ENCODE measurements at regions of chr6 and their contacts with region 1.

Region 1: DNA sequence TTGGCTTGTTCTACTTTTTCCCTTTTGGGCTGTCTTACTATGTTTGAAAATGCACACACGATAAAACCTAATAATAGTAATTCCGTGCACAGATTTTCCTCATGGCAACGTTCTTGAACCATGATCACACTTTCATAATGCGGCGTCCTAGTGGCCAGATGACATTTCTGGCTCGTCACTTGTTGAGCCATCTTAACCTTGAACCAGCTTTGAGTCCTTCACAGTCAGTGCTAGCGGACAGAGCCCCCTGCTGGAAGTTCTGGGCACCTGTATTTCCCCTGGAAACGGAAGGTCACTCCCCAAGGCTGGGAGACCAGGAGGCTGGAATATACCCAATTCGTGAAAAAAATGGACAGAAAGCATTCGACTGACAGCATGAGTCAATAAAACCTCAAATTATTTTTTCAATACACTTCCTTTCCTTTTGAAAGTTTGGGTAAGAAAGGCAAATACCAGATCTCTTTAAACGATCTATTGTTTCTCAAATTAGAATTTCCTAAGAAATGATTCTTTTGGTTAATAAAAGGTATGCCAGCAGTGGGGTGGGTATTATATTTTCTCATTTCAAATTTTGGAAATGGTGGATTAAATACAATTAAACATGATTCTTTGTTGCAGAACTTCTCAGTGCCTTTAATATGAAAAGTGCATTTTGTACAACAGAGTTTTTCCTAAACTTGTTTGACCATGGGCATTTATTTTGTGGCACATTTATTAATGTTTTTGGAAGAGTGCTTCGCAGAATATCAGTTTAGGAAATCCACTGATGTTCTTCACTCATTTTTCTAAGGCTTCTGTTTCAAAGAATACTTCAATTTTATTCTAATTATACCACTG is 542.3 kb downstream of the QKI start:
- DNase-seq: peak; percentile 81 to 94 (median 90)
- ATAC-seq: peak; percentile 89 to 92
- H3K4me3 ChIP-seq: no peak overlapping the region
- H3K27ac ChIP-seq: no peak overlapping the region
- H3K4me1 ChIP-seq: no peaks in the 10 kb centered on the region
- H3K27me3 ChIP-seq: no peaks in the 10 kb centered on the region

Region 2: DNA sequence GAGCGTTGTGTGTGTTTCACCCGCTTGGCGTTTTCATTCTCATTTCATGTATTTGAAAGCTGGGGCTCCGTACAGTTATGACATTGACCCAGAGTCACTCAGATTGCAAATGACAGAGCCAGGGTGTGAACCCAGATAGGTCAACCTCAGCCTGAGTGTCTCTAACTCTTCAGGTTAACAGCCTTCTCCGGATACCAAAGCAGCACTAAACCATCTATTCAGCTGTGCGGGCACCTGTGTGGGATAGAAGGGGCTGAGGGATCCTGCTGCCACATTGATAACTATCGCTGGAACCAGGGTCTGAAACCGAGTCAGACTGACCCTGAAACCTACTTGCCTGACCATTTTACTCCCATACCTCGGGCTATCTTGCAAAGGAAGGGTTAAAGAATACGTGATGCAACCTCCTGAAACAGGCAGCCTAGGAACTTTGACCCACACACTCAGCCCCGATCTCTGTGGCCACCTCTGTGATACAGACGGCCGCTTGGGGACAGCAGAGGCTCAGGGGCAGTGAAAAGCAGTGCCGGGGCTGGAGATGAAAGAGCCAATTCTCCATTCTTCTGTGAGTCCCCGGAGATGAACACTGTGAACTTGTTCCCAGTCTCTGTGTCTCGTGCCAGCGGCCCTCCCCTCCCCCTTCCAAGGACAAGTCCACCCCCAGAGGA is 775.8 kb before region 1 on chr6:
- intact Hi-C with region 1: loop called in 2 of 4 experiments (anchors 10 kb)
- DNase-seq: peak; percentile 80 to 92 (median 90)
- ATAC-seq: peak; percentile 96
- H3K4me3 ChIP-seq: no peak overlapping the region
- H3K27ac ChIP-seq: no peak overlapping the region
- H3K4me1 ChIP-seq: peaks cover 3% of the 10 kb centered on the region
- H3K27me3 ChIP-seq: no peaks in the 10 kb centered on the region

Region 3: DNA sequence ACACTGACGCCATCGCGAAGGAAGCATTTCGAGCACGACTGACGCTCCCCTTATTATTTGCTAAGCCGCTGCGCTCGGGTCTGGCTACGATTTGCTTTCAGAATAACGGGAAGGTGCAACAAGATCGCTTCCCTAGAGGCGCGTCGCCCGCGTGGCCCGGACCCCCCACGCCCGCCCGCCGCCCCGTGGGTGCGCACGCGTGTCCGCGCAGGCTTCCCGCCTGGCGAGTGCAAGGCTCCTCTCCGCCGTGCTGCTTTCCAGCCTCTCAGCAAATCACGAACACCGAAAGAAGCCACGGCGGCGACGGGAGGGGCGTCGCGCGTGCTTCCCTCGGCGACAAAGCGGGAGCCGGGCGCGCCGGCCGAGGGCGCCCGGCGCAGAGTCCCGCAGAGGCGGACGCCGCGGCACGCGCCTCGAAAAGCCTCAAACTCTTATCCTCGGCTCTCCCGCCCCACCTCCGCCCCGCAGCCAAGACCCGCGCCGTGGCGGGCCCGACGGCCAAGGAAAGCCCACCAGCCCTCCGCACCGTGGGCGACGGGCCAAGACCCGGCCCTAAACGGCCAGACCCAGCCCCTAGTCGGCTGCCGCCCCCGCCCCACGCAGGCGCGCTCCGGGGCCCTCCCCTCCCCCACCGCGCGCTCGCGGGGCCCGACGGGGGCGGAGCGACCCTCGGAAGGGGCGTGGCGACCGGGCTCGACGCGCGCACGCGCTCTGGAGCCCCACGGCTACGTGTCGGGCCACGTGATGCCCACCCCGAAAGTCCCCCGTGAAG is 543.3 kb before region 1 on chr6:
- intact Hi-C with region 1: loop called in 1 of 4 experiments (anchors 5 kb)
- DNase-seq: peak; percentile 88 to 96 (median 96)
- ATAC-seq: peak; percentile 92 to 93
- H3K4me3 ChIP-seq: peak overlapping the region; percentile 100
- H3K27ac ChIP-seq: peak overlapping the region; percentile 99
- H3K4me1 ChIP-seq: no peaks in the 10 kb centered on the region
- H3K27me3 ChIP-seq: no peaks in the 10 kb centered on the region

Region 4: GRCh38 chr6:163427498-163428254 is 529.1 kb before region 1 on chr6:
- intact Hi-C with region 1: loop called in 3 of 4 experiments (anchors 5 to 10 kb)
- DNase-seq: peak in 1 of 3 donors; percentile 34
- ATAC-seq: peak; percentile 51 to 63
- H3K4me3 ChIP-seq: no peak overlapping the region
- H3K27ac ChIP-seq: no peak overlapping the region
- H3K4me1 ChIP-seq: peaks cover 12% of the 10 kb centered on the region
- H3K27me3 ChIP-seq: no peaks in the 10 kb centered on the region

Region 5: GRCh38 chr6:163585932-163586437 is 370.8 kb before region 1 on chr6:
- intact Hi-C with region 1: loop called in 1 of 4 experiments (anchors 5 kb)
- DNase-seq: peak in 2 of 3 donors; percentile 70 to 76
- ATAC-seq: peak; percentile 82 to 94
- H3K4me3 ChIP-seq: no peak overlapping the region
- H3K27ac ChIP-seq: peak overlapping the region; percentile 9
- H3K4me1 ChIP-seq: peaks cover 2% of the 10 kb centered on the region
- H3K27me3 ChIP-seq: no peaks in the 10 kb centered on the region

Region 6: DNA sequence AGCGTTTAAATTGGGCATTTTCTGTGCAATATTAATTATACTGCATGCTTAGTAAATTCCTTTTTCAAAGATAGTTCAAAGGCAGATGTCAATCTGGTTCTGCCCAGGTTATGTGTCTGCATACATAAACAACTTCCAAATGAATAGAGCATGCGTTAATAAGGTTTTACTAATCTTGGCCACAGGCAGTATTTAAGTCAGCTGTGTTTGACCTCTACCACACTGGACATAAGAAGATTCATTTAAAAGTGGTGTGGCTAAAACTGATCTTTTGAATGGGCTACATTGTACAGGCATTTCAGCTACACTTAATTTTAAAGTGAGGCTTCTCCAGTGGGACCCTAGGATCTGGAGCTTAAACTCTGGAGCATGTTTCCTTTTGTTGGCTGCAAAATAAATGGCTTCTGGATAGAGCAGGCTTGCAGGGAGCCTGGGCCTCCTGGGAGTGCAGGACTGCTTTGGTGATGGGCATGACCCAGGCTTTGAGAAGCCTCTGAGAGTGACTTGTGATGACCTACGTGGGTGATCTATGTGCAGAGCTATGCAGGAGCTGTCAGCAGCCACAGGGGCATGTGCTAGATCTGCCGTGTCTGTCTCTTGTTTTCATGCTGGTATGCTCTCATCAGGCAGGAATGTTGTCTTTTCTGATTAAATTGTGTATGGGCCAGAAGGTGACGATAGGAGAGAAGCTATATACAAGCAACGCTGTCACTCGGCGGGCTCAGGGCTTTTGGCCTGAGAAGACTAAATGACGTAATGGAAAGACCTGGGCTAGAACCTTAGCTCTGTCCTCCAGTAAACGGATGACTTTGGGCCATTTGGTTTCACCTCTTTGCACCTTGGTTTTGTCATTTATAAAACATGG is 211.0 kb before region 1 on chr6:
- intact Hi-C with region 1: loop called in 1 of 4 experiments (anchors 10 kb)
- DNase-seq: peak; percentile 49 to 81 (median 65)
- ATAC-seq: peak; percentile 87 to 91
- H3K4me3 ChIP-seq: no peak overlapping the region
- H3K27ac ChIP-seq: peak overlapping the region; percentile 34
- H3K4me1 ChIP-seq: peaks cover 7% of the 10 kb centered on the region
- H3K27me3 ChIP-seq: no peaks in the 10 kb centered on the region

Region 7: DNA sequence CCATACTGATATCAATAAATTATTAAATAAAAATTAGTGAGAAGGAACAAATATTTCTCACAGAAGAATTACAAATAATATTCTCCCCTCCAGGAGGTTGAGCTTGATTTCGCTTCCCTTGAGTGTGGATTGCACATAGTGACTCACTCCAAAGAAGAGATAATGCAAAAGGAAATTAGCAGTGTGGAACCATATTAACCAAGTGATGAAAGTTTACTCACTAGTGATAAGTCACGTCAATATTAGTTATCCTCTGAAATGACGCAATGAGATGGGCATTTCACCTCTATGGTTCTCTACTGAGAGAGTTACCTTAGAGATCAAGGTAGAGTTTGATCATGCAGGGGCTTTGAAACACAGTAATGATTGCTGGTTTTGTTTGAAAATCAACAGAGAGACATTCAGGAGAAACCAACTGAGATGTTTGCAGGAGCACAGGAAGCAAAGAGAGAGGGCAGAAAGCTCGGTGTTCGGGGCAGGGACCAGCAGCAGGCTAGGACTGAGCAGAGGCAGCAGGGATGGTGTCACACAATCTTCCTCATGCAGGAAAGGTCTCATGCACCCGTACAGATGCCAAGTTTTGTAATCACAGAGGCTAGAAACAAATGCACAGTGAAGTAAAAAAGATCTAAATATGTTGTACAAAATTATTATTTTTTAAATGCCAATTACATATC is 92.2 kb after region 1 on chr6:
- intact Hi-C with region 1: no loop called
- DNase-seq: no peak
- ATAC-seq: peak in 1 of 2 donors; percentile 31
- H3K4me3 ChIP-seq: no peak overlapping the region
- H3K27ac ChIP-seq: no peak overlapping the region
- H3K4me1 ChIP-seq: no peaks in the 10 kb centered on the region
- H3K27me3 ChIP-seq: no peaks in the 10 kb centered on the region

Region 8: DNA sequence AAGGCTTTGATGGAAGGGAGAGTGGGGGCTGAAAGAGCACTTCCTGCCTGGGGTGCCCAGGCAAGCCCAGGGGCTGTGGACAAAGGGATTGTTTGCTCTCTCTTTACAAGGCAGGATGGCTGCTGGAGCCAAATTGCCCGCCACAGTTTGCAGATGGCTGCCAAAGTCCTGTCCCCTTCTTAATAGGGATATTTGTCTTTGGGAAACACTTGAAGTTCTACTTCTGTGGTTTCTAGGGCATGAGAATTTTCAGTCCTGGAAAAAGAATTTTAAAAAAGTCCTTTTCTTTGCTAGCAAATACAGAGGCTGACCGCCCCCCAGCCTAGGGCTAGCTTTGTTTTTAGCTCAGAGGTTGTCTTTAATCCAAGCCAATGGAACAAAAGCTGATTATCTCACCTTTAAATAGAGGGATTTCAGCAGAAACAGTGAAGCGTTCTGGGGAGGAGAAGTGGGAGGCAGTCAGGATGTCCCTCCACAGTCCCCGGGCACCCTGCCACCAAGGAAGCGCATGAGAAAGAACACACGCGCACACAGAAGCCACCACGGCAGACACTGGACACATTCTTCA is 194.5 kb after region 1 on chr6:
- intact Hi-C with region 1: no loop called
- DNase-seq: peak; percentile 36 to 81 (median 80)
- ATAC-seq: peak; percentile 62 to 68
- H3K4me3 ChIP-seq: no peak overlapping the region
- H3K27ac ChIP-seq: no peak overlapping the region
- H3K4me1 ChIP-seq: peaks cover 3% of the 10 kb centered on the region
- H3K27me3 ChIP-seq: no peaks in the 10 kb centered on the region